ENCODE measurements at regions of chr1 and their contacts with region 1.

Region 1: DNA sequence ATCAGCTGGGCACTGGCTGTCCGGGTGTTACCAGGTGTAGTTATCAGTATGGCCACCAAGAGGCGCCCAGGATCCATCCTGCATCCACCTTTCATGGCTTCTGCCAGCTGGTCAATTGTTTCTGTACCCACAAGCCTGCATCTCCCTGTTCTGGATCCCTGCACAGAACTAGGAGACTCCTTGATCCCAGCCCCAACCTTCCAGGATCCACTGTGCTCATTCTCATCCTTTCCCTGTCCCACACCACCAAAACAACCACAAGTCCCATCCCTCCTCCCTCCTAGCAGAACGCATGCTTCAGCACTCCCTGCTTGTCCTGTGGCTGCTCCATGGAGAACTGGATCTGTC is 27.2 kb upstream of the FOXE3 start:
- DNase-seq: peak; percentile 78 to 82 (median 80)
- ATAC-seq: peak; percentile 93
- H3K4me3 ChIP-seq: no peak overlapping the region
- H3K27ac ChIP-seq: no peak overlapping the region
- H3K4me1 ChIP-seq: no peaks in the 10 kb centered on the region; a peak in 1 of 5 replicates
- H3K27me3 ChIP-seq: peaks cover 7 to 8% of the 10 kb centered on the region in 2 experiments; a peak in 4 of 5 replicates
- CTCF ChIP-seq: peak; percentile 92 to 96 (median 94)
- EP300 ChIP-seq: no peak
- POLR2A ChIP-seq: no peak
- RAD21 ChIP-seq: peak; percentile 62 to 90

Region 2: GRCh38 chr1:47424336-47424982 is 35.6 kb after region 1 on chr1:
- CTCF ChIA-PET with region 1: interaction called, 6 read pairs
- POLR2A ChIA-PET with region 1: interaction called, 3 read pairs
- in situ Hi-C with region 1: no loop called
- intact Hi-C with region 1: loop called (anchors 1 kb)
- DNase-seq: peak; percentile 55 to 77 (median 70)
- ATAC-seq: peak; percentile 66
- H3K4me3 ChIP-seq: no peak overlapping the region
- H3K27ac ChIP-seq: no peak overlapping the region
- H3K4me1 ChIP-seq: no peaks in the 10 kb centered on the region; a peak in 1 of 5 replicates
- H3K27me3 ChIP-seq: peaks cover 18 to 31% of the 10 kb centered on the region in 2 experiments
- CTCF ChIP-seq: peak; percentile 85 to 94 (median 91)
- EP300 ChIP-seq: no peak
- POLR2A ChIP-seq: no peak
- RAD21 ChIP-seq: peak; percentile 49 to 74; a peak in 3 of 4 replicates

Region 3: GRCh38 chr1:47710329-47711071 is 321.6 kb after region 1 on chr1:
- CTCF ChIA-PET with region 1: interaction called, 6 read pairs
- POLR2A ChIA-PET with region 1: no interaction called
- in situ Hi-C with region 1: no loop called
- intact Hi-C with region 1: loop called (anchors 1 kb)
- DNase-seq: peak; percentile 71 to 97 (median 94)
- ATAC-seq: peak; percentile 96
- H3K4me3 ChIP-seq: no peak overlapping the region
- H3K27ac ChIP-seq: no peak overlapping the region
- H3K4me1 ChIP-seq: peaks cover 0 to 24% of the 10 kb centered on the region in 2 experiments; a peak in 2 of 5 replicates
- H3K27me3 ChIP-seq: peaks cover 30 to 60% of the 10 kb centered on the region in 2 experiments; a peak in 4 of 5 replicates
- CTCF ChIP-seq: peak; percentile 93 to 98 (median 96)
- EP300 ChIP-seq: no peak
- POLR2A ChIP-seq: no peak
- RAD21 ChIP-seq: peak; percentile 87 to 95

Region 4: GRCh38 chr1:47725992-47726855 is 337.4 kb after region 1 on chr1:
- CTCF ChIA-PET with region 1: interaction called, 7 read pairs
- POLR2A ChIA-PET with region 1: no interaction called
- in situ Hi-C with region 1: no loop called
- intact Hi-C with region 1: loop called (anchors 1 kb)
- DNase-seq: peak; percentile 80 to 86 (median 80)
- ATAC-seq: peak; percentile 98
- H3K4me3 ChIP-seq: no peak overlapping the region
- H3K27ac ChIP-seq: no peak overlapping the region
- H3K4me1 ChIP-seq: peaks cover 0 to 10% of the 10 kb centered on the region in 2 experiments; a peak in 1 of 5 replicates
- H3K27me3 ChIP-seq: peaks cover 15 to 59% of the 10 kb centered on the region in 2 experiments
- CTCF ChIP-seq: peak; percentile 87 to 96 (median 93)
- EP300 ChIP-seq: no peak
- POLR2A ChIP-seq: no peak
- RAD21 ChIP-seq: peak; percentile 69 to 91